ENCODE measurements at regions of chr17 and their contacts with region 1.

Region 1: GRCh38 chr17:52032454-52032853 is 126.1 kb downstream of the CA10 start:
- DNase-seq: no peak
- ATAC-seq: no peak
- H3K4me3 ChIP-seq: no peak overlapping the region
- H3K27ac ChIP-seq: no peak overlapping the region
- H3K4me1 ChIP-seq: no peaks in the 10 kb centered on the region
- H3K27me3 ChIP-seq: no peaks in the 10 kb centered on the region
- CTCF ChIP-seq: no peak

Region 2: DNA sequence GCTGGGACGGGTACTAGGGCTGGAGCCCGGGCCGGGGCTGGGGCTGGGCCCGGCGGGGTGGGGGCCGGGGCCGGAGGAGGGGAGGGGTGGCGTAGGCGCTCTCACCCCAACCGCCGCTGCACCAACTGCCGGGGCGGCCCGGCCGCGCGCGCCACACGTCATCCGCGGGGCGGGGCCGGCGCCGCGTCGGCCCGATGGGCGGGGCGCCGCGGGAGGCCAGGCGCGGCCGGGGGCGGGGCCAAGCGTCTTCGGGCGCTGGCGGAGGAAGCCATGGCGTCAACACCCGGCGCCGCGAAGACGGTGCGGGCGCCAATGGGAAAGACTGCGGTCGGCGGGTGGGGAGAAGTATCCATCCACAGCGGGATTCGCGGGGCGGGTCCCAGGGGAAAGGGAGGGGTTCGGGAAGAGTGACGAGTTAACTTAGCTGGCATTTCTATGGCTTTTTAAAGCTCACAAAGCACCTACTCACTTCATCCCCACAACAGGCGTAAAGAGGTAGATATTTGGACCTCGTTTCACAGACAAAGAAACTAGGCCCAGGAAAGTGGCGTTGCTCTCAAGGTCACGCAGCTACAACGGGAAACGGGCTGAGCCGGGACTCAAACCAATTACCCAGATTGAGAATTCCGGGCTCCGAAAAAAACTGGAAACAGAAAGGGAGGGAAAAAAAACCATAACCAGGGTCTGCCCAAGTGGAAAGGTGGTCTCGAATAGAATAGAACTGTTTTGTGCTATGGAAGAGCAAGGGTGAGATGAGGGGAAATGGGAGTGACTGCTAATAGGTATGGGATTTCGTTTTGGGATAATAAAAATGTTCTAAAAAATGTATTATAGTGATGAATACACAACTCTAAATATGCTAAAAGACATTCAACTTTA is 911.5 kb before region 1 on chr17 and contains the start of gene SPAG9:
- CTCF ChIA-PET with region 1: interaction called, 10 read pairs
- POLR2A ChIA-PET with region 1: no interaction called
- in situ Hi-C with region 1: no loop called
- intact Hi-C with region 1: no loop called
- DNase-seq: peak; percentile 76
- ATAC-seq: peak; percentile 90
- H3K4me3 ChIP-seq: peak within 1 kb of the TSS; percentile 84 to 92
- H3K27ac ChIP-seq: peak within 1 kb of the TSS; percentile 97
- H3K4me1 ChIP-seq: peaks cover 27% of the 10 kb centered on the region
- H3K27me3 ChIP-seq: no peaks in the 10 kb centered on the region
- CTCF ChIP-seq: no peak
- total RNA-seq, gene SPAG9: 144 TPM

Region 3: GRCh38 chr17:51166197-51166986 is 866.1 kb before region 1 on chr17 and contains the start of gene NME2:
- CTCF ChIA-PET with region 1: no interaction called
- POLR2A ChIA-PET with region 1: no interaction called
- in situ Hi-C with region 1: no loop called
- intact Hi-C with region 1: no loop called
- DNase-seq: peak; percentile 47
- ATAC-seq: peak; percentile 94
- H3K4me3 ChIP-seq: peak within 1 kb of the TSS; percentile 71 to 93
- H3K27ac ChIP-seq: peak within 1 kb of the TSS; percentile 89
- H3K4me1 ChIP-seq: peaks cover 11% of the 10 kb centered on the region
- H3K27me3 ChIP-seq: no peaks in the 10 kb centered on the region
- CTCF ChIP-seq: no peak
- total RNA-seq, gene NME2: 1,280 TPM